Caco-2 (cell line): ENCODE measurements at regions of chr4 and their contacts with region 1.

Region 1: DNA sequence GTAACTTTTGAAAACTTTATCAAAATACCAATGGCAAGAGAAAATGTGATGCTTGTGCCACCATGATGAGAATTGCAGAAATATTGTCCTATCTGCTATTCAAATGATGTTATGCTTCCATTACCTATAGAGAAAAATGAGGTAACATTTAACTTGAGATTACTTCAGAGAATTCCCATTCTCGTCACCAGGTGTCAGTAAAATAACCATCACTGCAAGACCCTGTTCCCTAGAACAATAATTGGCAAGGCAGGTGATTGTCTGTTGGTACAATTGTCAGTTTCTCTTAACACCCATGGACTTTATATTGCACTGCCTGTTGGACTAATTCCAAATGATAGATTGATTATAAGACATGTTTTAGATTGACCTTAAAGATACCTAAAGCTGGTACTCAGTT is 179.9 kb downstream of the GABRG1 start:
- DNase-seq: peak in 1 of 2 experiments; percentile 17
- H3K4me3 ChIP-seq: no peak overlapping the region
- H3K4me3 Mint-ChIP-seq: no peak overlapping the region
- H3K27ac Mint-ChIP-seq: no peak overlapping the region
- H3K4me1 ChIP-seq: no peaks in the 10 kb centered on the region
- H3K4me1 Mint-ChIP-seq: no peaks in the 10 kb centered on the region
- H3K27me3 ChIP-seq: no peaks in the 10 kb centered on the region
- H3K27me3 Mint-ChIP-seq: peaks cover 3% of the 10 kb centered on the region
- CTCF ChIP-seq: peak in 1 of 2 experiments; percentile 24

Region 2: DNA sequence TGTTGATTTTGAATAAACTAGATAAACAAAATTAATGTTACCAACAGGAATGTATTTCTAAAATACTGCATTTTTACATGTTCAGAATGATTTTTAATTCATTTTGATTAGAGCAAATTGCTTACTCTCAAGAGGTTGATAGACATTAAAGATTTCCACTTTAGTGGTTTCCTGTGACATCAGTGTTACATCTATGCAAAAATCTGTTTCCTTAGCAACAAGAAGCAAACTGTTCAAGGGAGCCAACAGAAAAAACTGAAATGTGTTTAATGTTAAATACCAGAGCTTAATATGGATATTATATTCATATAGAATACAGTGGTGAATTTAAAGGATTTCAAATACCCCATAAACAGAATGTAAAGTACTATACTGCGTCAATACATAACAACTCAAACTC is 98.0 kb before region 1 on chr4:
- CTCF ChIA-PET with region 1: no interaction called
- POLR2A ChIA-PET with region 1: no interaction called
- intact Hi-C with region 1: no loop called
- DNase-seq: no peak
- H3K4me3 ChIP-seq: no peak overlapping the region
- H3K4me3 Mint-ChIP-seq: no peak overlapping the region
- H3K27ac Mint-ChIP-seq: no peak overlapping the region
- H3K4me1 ChIP-seq: no peaks in the 10 kb centered on the region
- H3K4me1 Mint-ChIP-seq: no peaks in the 10 kb centered on the region
- H3K27me3 ChIP-seq: no peaks in the 10 kb centered on the region
- H3K27me3 Mint-ChIP-seq: peaks cover 3% of the 10 kb centered on the region
- CTCF ChIP-seq: no peak

Region 3: DNA sequence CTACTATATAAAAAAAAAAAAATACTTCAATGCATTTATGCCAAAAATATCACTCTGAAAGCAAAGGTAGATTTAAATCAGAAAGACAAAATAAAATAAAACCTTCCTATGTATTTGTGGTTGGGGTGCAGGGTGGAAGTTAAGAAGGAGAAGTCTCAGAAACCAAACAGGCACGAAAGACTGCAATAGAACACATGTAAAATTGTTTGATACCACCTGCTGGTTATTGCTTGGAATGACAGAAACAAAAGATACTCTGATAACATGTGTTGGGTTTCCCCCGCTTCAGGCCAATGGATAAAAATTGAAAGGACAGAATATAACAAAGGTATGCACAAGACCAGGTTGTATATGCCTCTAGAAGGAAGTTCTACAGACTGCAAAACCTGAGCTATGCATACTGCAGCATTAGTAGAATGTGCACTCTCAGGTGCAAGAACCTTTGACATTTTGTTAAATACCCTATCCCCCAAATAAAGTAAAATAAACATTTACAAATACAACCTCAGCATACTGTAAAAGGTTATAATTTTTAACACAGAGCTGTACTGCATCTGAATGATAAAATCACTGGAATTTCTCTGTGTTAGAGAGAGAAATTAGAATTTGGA is 327.1 kb after region 1 on chr4:
- CTCF ChIA-PET with region 1: no interaction called
- POLR2A ChIA-PET with region 1: no interaction called
- intact Hi-C with region 1: loop called (anchors 1 kb)
- DNase-seq: peak in 1 of 2 experiments; percentile 27
- H3K4me3 ChIP-seq: no peak overlapping the region
- H3K4me3 Mint-ChIP-seq: no peak overlapping the region
- H3K27ac Mint-ChIP-seq: no peak overlapping the region
- H3K4me1 ChIP-seq: no peaks in the 10 kb centered on the region
- H3K4me1 Mint-ChIP-seq: no peaks in the 10 kb centered on the region
- H3K27me3 ChIP-seq: no peaks in the 10 kb centered on the region
- H3K27me3 Mint-ChIP-seq: no peaks in the 10 kb centered on the region
- CTCF ChIP-seq: peak; percentile 43 to 49